Sigmoid colon (tissue), 7 donors: ENCODE measurements at regions of chr1 and their contacts with region 1.

Region 1: GRCh38 chr1:245045087-245045881 is 109.5 kb upstream of the KIF26B start:
- DNase-seq: no peak
- H3K4me3 ChIP-seq: no peak overlapping the region
- H3K27ac ChIP-seq: peak overlapping the region in 1 of 4 donors; percentile 4
- H3K4me1 ChIP-seq: peaks cover 0 to 7% (median 0%) of the 10 kb centered on the region in 4 donors
- H3K27me3 ChIP-seq: no peaks in the 10 kb centered on the region
- CTCF ChIP-seq: no peak
- EP300 ChIP-seq: no peak
- POLR2A ChIP-seq: no peak

Region 2: GRCh38 chr1:244552340-244552739 is 492.9 kb before region 1 on chr1:
- intact Hi-C with region 1: no loop called
- DNase-seq: no peak
- H3K4me3 ChIP-seq: no peak overlapping the region
- H3K27ac ChIP-seq: no peak overlapping the region
- H3K4me1 ChIP-seq: no peaks in the 10 kb centered on the region
- H3K27me3 ChIP-seq: no peaks in the 10 kb centered on the region
- CTCF ChIP-seq: no peak
- EP300 ChIP-seq: no peak
- POLR2A ChIP-seq: no peak

Region 3: DNA sequence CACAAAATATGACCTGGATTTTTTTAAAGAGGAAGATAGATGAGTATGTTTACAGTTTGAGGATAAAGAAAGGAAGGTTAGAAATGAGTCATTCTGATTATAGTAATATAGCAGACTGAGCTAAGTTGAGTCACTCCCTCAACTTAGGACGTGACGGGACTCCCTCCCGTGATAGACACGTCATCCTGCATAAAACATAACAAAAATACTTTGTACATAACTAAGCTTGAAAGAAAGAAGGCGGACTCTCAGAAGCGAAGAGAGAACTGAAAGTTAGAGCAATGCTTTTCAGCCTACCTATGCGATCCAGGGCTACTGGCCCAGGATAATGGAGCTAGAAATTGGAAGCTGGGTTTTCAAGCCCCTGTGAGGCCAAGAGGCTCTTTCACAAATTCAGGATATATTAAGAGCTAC is 445.3 kb before region 1 on chr1:
- intact Hi-C with region 1: loop called (anchors 5 kb)
- DNase-seq: no peak
- H3K4me3 ChIP-seq: peak overlapping the region in 1 of 4 donors; percentile 6
- H3K27ac ChIP-seq: peak overlapping the region in 2 of 4 donors; percentile 33 to 48
- H3K4me1 ChIP-seq: peaks cover 0 to 9% (median 0%) of the 10 kb centered on the region in 4 donors
- H3K27me3 ChIP-seq: no peaks in the 10 kb centered on the region
- CTCF ChIP-seq: no peak
- EP300 ChIP-seq: no peak
- POLR2A ChIP-seq: no peak

Region 4: DNA sequence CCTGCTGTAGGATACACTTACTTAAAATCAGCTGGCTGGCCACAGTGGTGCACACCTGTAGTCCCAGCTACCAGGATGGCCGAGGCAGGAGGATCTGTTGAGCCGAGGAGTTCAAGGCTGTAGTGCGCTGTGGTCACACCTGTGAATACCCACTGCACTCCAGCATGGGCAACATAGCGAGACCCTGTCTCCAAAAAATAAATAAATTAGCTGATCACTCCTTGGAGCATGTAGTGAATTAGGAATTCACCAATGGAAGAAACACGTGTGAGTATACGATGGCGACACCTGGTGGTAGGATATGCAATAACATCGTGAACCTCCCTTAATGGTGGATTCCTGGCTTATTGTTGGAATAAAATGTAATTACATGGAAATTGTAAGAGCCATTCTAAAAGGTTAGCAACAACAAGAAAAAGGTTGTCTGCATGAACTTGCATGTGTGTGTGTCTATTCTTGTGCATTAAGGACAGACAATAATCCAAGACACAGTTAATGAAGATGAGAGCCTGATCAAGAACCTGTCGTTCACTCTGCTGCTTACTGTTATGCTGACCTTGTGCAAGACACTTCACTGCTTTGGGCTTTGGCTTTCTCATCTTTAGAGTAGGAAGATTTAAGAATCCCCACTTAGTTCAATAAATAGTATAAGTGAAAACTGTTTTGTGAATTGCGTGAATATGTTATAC is 248.4 kb before region 1 on chr1:
- intact Hi-C with region 1: loop called (anchors 1 kb)
- DNase-seq: peak; percentile 72
- H3K4me3 ChIP-seq: no peak overlapping the region
- H3K27ac ChIP-seq: no peak overlapping the region
- H3K4me1 ChIP-seq: peaks cover 0 to 6% (median 0%) of the 10 kb centered on the region in 4 donors
- H3K27me3 ChIP-seq: no peaks in the 10 kb centered on the region
- CTCF ChIP-seq: peak; percentile 71 to 84 (median 79)
- EP300 ChIP-seq: no peak
- POLR2A ChIP-seq: no peak

Region 5: GRCh38 chr1:244896550-244896949 is 148.7 kb before region 1 on chr1:
- intact Hi-C with region 1: no loop called
- DNase-seq: no peak
- H3K4me3 ChIP-seq: no peak overlapping the region
- H3K27ac ChIP-seq: no peak overlapping the region
- H3K4me1 ChIP-seq: no peaks in the 10 kb centered on the region
- H3K27me3 ChIP-seq: no peaks in the 10 kb centered on the region
- CTCF ChIP-seq: no peak
- EP300 ChIP-seq: no peak
- POLR2A ChIP-seq: no peak